GM13977 (cell line): ENCODE measurements at regions of chr6 and their contacts with region 1.

Region 1: DNA sequence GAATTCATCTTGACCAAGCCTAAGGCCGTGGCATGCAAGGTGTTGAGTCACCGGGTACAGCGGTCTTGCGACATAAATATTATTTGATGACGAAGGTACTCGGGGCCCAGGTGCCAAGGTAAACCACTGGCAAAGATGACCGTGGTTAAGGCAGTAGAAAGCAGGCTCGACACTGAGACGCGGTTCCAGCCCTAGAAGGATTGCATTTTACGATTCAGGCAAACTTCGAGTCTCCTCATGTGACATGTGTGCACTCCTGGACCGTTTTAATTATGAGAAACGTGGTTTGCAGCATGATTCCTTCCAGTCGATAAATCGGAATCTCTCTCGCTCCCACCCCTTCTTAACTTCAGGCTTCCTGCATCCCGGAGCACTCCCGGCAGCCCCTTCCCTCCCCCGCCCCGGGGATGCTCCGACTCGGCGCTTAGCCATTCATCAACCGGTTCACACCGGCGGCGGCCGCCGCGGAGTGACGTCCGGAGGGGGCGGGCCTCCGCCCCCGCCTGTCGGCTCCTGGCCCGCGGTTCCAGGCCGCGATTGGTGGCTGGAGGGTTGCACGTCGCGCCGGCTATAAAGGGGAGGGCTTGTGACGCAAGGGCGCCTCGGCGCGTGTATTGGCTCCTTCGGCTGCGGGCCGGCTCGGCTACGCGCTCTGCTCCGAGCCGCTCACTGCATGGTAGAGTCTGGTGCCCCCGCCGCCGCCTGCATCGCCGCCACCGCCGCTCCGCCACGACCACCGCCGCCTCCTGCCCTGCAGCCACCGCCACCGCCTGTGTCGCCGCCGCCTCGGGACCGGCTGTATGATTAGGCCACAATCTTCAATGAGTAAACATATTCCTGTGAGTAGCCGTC is at the starts of genes LOC128125822 and PTP4A1:
- DNase-seq: peak; percentile 95
- CTCF ChIP-seq: no peak

Region 2: DNA sequence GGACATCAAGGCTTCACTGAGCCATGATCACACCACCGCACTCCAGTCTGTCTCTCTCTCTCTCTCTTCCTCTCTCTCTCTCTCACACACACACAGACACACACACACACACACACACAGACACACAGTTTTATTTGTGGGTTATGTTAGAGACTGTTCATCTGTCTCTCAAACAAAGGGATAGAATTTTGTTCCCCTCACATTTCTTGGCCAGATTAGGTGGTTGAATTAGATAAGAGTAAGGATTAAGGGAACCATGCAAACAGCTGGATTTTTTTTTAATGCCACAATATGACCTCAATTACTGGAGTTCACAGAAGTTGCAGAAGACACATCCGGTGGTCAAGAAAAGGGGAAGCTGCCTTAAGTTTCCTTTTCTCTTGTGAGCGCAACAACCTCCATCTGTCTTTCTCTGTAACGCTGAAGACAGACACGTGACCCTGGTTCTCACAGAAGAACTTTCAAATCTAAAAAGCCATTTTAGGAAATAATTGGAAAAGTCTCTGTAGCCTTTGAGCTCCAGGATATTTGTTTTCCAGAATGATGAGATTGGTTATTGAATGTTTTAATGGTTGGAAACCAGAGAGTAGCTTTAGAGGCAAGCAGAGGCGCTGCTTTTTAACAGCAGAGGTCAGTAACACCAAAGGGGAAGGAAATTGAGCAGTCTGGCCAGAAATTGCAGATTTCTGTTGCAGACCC is 219.4 kb before region 1 on chr6:
- in situ Hi-C with region 1: loop called (anchors 25 kb)
- DNase-seq: peak; percentile 43
- CTCF ChIP-seq: peak; percentile 80